ENCODE measurements at regions of chr1 and their contacts with region 1.

Region 1: DNA sequence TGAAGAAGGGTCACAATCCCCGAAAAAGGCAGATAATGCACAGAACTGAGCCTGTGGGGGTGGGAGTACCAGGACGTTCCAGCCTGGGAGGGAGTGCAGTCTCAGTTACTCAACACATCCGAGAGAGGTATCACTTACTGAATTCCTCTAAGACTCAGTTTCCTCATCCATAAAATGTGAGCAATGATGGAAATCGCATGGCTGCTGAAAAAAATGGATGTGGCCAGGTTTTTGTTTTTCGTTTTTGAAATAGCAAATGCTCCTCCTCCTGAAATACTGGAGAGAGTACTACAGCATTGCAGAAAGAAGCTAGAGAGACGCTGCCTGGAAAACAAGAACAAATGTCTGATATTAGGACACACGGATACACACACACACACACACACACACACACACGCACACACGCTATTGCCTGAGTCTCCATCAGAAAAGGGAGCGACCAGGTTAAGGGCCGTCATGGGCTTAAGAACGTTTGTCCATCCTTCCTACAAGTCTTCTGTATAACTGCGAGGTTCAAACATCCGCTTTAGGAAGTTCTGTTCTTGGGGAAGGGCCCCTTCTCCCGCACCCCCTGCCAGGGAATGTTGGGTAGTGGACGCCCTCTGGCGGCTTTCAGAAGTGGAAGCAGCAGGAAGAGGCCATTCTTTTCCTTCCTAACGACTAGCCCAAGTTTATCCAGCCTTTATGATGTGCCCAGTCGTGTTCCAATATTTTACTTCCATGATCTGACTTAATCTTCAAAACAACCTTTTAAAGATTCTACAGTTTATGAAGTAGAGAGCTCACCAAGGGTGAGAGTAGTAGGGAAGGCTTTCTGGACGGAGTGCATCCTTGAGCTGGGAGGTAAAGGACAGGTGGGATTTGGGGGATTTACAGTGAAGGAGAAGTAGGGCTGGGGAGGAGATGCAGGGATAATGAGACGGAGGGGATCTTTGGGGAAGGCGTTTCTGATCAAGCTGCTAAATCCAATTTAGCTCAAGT is 699 bp upstream of the NES start:
- DNase-seq: peak; percentile 76
- H3K4me3 Mint-ChIP-seq: peak overlapping the region; percentile 31
- H3K27ac Mint-ChIP-seq: peak overlapping the region; percentile 6
- H3K4me1 Mint-ChIP-seq: peaks cover 13% of the 10 kb centered on the region
- H3K27me3 Mint-ChIP-seq: peaks cover 80% of the 10 kb centered on the region

Region 2: GRCh38 chr1:156625436-156626078 is 52.3 kb before region 1 on chr1:
- intact Hi-C with region 1: loop called (anchors 1 kb)
- DNase-seq: peak; percentile 90
- H3K4me3 Mint-ChIP-seq: peak overlapping the region; percentile 84
- H3K27ac Mint-ChIP-seq: peak overlapping the region; percentile 50
- H3K4me1 Mint-ChIP-seq: peaks cover 9% of the 10 kb centered on the region
- H3K27me3 Mint-ChIP-seq: peaks cover 60% of the 10 kb centered on the region

Region 3: GRCh38 chr1:156927215-156928042 is 249.5 kb after region 1 on chr1:
- intact Hi-C with region 1: no loop called
- DNase-seq: peak; percentile 92
- H3K4me3 Mint-ChIP-seq: peak overlapping the region; percentile 53
- H3K27ac Mint-ChIP-seq: no peak overlapping the region
- H3K4me1 Mint-ChIP-seq: peaks cover 23% of the 10 kb centered on the region
- H3K27me3 Mint-ChIP-seq: peaks cover 76% of the 10 kb centered on the region